ENCODE measurements at regions of chr9 and their contacts with region 1.

Region 1: DNA sequence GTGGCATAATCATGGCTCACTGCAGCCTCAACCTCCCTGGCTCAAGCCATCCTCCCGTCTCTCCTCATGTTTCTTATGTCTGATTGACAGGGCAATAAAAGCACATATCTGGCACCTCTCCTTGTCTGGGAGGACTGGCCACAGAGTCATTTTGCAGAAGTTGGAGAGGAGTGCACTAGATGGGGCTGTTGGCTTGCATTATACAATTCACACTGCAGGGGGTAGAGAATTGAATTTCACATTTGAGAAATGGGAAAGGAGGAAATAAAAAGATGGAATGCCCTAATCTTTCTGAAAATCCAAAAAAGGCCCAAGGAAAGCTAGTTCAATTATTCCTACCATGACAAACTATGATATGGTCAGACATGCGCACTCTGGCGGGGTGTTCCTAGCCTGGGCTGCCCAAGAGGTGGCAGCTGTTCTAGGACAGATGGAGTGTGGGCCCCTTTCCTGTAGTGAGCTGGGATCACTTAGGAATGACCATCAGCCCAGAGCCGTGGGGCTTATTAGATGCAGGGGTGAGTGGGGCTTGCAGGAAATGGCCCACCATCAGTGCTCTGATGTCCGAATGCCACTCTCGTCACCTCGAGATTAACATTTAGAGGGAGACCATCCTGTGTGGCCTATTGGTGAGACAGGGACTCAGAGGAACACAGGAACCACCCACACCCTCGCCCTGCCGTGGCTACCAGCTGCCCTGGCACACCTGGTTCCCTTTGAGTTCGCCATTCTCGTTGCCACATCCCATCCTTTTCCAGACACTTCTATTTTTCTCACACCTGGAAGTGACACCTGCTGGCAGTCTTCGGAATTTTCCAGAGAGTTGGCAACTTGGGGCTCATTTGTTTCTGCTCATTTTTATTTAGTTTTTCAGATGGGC is 21.8 kb upstream of the ANKRD18A start:
- DNase-seq: peak in 2 of 10 donors; percentile 56 to 59
- H3K4me3 ChIP-seq: no peak overlapping the region
- H3K27ac ChIP-seq: peak overlapping the region in 48 of 59 donors; percentile 26 to 96 (median 86)
- H3K27me3 ChIP-seq: peaks cover 0 to 8% (median 0%) of the 10 kb centered on the region in 45 donors
- CTCF ChIP-seq: peak; percentile 23 to 80 (median 64)

Region 2: GRCh38 chr9:38208206-38208901 is 433.9 kb before region 1 on chr9:
- intact Hi-C with region 1: no loop called
- DNase-seq: no peak
- H3K4me3 ChIP-seq: no peak overlapping the region
- H3K27ac ChIP-seq: no peak overlapping the region
- H3K27me3 ChIP-seq: peaks cover 0 to 3% (median 0%) of the 10 kb centered on the region in 45 donors
- CTCF ChIP-seq: no peak

Region 3: GRCh38 chr9:38687387-38687842 is 45.2 kb after region 1 on chr9:
- intact Hi-C with region 1: loop called in 1 of 2 experiments (anchors 5 kb)
- DNase-seq: peak in 1 of 10 donors; percentile 36
- H3K4me3 ChIP-seq: peak overlapping the region in 21 of 59 donors; percentile 4 to 42 (median 16)
- H3K27ac ChIP-seq: peak overlapping the region in 58 of 59 donors; percentile 30 to 98 (median 89)
- H3K27me3 ChIP-seq: no peaks in the 10 kb centered on the region
- CTCF ChIP-seq: no peak

Region 4: DNA sequence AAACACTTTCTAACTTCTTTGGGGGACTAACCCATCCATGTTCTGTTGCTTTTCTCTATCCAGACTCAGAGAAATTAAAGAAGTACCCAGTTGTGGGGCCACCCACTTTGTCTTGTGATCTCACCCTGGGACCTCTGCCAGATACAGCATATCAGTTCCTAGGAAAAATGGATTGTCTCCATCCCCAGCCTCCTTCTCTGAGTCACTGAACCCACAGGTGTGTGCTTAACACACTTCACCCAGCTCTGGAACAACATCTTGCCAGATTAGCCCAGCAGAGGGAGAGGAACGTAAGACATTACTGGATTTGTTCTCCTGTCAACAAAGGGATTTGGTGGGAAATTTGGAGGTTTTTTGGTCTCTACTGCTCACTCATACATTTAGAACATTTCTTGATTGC is 58.5 kb after region 1 on chr9:
- intact Hi-C with region 1: no loop called
- DNase-seq: no peak
- H3K4me3 ChIP-seq: no peak overlapping the region
- H3K27ac ChIP-seq: no peak overlapping the region
- H3K27me3 ChIP-seq: peaks cover 0 to 3% (median 0%) of the 10 kb centered on the region in 45 donors
- CTCF ChIP-seq: no peak

Measured in dorsolateral prefrontal cortex (tissue), 120 donors.